Cardiac septum (tissue), 1 donor: ENCODE measurements at regions of chr9 and their contacts with region 1.

Region 1: GRCh38 chr9:125544988-125545651 is 161.9 kb downstream of the MAPKAP1 start:
- DNase-seq: no peak

Region 2: DNA sequence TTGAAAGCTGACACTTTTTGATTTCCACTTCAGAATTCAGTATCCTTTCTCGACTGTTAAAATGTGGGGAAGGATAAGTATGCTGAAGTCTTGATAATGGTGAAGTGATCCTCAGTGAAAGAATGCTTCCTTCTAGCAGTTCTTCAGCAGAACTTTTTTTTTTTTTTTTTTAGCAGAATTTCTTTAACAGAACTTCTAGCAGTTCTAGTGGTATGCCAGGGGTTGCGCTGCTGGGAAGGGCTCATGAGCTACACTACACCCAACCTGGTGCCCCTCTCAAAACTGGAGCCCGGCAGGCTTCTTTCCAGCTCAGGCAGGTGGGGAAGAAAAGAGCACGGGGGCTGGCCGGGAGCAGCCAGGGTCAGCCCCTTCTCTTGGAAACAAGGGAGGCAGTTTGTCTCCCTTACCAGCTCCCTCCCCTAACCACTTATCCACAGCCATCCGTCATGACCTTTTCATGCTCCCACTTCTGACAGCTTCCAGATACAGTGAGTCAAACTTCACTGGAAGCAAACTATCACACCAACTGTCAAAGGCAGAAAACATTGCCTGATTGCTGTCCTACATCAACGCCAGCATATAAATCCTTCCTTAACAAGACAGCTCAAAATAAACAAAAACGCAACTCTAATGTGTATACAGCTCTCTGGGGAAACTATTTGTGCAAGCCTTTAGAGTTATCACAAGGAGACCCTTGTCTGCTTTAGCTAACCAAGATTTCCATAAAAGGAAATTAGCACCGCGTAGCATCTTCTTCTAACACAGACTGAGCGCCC is 72.0 kb before region 1 on chr9:
- intact Hi-C with region 1: loop called (anchors 5 kb)
- DNase-seq: no peak

Region 3: DNA sequence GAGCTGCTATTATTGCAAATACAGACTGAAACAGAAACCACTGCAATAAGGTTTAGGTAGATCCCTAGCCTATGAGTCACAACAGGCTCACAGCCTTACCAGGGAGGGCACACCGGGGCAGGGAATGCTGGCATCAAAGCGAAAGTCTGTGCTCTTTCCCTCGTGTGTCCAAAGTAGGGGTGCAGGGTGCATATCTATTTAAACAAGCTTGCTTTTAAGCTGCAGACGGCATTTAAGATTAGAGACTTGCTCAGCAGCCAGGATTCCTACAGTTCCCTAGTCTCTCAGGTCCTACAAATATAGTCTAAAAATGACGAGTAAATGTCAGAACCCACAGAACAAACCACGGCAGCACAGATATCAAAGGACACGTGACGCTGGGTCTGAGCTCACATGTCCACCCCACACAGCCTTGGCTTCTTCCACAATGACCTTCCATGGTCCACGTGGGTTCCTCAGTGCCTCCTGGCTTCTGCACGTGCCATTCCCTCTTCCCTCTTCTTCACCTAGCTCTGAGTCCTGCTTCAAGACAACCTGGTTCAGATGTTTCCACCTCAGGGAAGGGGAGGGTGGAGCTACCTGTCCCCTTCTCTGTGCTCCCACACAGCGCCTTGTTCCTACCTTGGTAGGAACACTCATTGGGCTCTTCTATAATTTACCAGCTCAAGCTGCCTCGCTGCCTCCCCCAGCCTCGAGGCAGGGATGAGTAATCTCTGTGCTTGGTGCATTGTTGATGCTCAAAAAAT is 31.3 kb before region 1 on chr9:
- intact Hi-C with region 1: loop called (anchors 5 kb)
- DNase-seq: no peak